HCT116 (cell line): ENCODE measurements at regions of chr6 and their contacts with region 1.

Region 1: GRCh38 chr6:30730601-30731435 is 10.7 kb downstream of the TUBB start:
- DNase-seq: peak; percentile 77
- ATAC-seq: peak; percentile 90
- H3K4me3 ChIP-seq: peak overlapping the region; percentile 41 to 53
- H3K27ac ChIP-seq: peak overlapping the region; percentile 55
- H3K4me1 ChIP-seq: peaks cover 12 to 37% of the 10 kb centered on the region in 2 experiments
- H3K27me3 ChIP-seq: no peaks in the 10 kb centered on the region
- CTCF ChIP-seq: peak; percentile 86 to 91 (median 88)
- POLR2A ChIP-seq: no peak
- RAD21 ChIP-seq: peak; percentile 98

Region 2: DNA sequence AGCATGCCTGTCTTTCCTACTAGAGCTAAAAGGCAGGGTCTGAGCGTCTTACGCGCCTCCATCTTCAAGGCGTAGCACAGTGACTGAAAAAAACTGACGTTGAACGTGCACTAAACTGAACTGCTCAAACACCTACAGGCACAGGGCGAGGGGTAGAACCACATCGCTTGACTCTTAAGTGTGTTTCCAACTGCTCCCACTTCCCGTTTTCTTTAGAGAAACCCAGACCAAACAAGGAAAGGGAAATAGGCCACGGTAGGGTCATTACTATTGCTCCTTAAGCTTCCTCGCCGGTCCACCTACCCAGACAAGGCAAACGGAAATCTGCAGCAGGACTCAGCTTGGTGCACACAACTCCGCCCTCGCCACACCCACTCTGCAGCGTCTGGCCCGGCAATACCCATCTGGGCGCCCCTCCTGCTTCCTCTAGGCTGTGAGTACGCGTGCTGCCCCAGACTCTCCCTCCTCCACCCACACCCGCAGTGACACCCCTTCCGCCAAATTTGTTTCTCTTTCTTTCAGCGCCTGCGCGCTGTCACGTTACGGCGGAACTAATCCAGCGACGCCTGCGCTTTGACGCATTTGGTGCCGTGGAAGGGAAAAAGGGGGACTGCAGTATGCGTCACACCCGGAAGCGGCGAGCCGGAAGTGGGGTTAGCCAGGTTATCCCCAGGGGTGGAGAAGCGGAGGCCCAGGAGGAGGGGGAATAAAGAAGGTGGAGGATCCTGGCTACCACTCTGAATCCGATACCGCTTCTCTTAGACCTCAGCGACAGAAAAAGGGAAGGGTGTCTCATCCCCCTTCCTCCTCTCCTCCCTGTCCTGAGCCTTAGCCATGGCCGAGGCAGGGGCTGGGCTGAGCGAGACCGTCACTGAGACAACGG is 664.0 kb before region 1 on chr6 and contains the start of gene PPP1R11:
- CTCF ChIA-PET with region 1: no interaction called
- POLR2A ChIA-PET with region 1: no interaction called
- RAD21 ChIA-PET with region 1: no interaction called
- intact Hi-C with region 1: no loop called
- DNase-seq: peak; percentile 99
- ATAC-seq: peak; percentile 96
- H3K4me3 ChIP-seq: peak within 1 kb of the TSS; percentile 78 to 84
- H3K27ac ChIP-seq: peak within 1 kb of the TSS; percentile 71
- H3K4me1 ChIP-seq: peaks cover 7 to 25% of the 10 kb centered on the region in 2 experiments; a peak in 3 of 4 replicates
- H3K27me3 ChIP-seq: no peaks in the 10 kb centered on the region
- CTCF ChIP-seq: no peak
- POLR2A ChIP-seq: peak; percentile 92
- RAD21 ChIP-seq: no peak
- total RNA-seq, gene PPP1R11: 29.3 TPM

Region 3: GRCh38 chr6:30541515-30542403 is 189.1 kb before region 1 on chr6:
- CTCF ChIA-PET with region 1: interaction called, 10 read pairs
- POLR2A ChIA-PET with region 1: interaction called, 4 read pairs
- RAD21 ChIA-PET with region 1: interaction called in 1 of 2 experiments, 5 read pairs
- intact Hi-C with region 1: loop called (anchors 5 kb)
- DNase-seq: peak; percentile 83
- ATAC-seq: peak; percentile 92
- H3K4me3 ChIP-seq: peak overlapping the region; percentile 36 to 47
- H3K27ac ChIP-seq: no peak overlapping the region
- H3K4me1 ChIP-seq: peaks cover 0 to 10% of the 10 kb centered on the region in 2 experiments; a peak in 2 of 4 replicates
- H3K27me3 ChIP-seq: no peaks in the 10 kb centered on the region
- CTCF ChIP-seq: peak; percentile 84 to 99 (median 97)
- POLR2A ChIP-seq: no peak
- RAD21 ChIP-seq: peak; percentile 78

Region 4: DNA sequence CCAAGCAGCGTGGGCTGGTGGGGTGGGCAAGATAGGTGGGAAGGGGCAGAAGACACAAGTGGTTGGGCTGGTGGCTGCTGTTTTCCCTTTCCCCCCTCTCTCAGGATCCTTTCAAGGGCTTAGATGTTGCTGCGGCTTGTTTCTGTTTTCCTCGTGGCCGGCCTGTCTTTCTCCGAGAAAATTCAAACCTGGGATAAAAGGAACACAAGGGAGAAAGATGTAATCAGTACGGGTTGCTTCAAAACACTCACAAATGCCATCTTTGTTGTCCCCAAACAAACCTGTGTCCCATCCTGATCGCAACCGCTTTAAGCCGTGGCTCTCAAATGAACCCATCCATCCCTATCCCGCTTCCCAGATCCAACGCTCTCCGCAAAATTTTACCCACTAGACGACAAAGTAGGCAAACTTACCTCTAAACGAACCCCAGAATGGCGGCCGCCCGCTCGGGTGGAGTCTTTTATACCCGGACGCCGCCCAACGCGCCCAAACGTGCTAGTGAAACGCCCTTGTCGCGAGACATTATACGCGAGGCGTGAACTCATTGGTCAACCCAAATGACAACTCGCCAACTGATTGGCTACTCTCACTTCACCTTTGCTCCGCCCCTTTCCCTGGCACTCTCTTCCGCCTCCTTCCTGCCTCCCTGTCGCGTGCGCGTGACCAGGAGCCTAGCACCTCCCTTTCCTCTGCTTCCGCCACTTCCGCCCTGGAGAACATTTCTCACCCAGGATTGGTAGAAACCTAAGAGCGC is 113.8 kb before region 1 on chr6 and contains the start of gene PPP1R10:
- CTCF ChIA-PET with region 1: interaction called, 26 read pairs
- POLR2A ChIA-PET with region 1: interaction called, 17 read pairs
- RAD21 ChIA-PET with region 1: interaction called in 1 of 2 experiments, 3 read pairs
- intact Hi-C with region 1: no loop called
- DNase-seq: peak; percentile 100
- ATAC-seq: peak; percentile 81
- H3K4me3 ChIP-seq: peak within 1 kb of the TSS; percentile 92 to 94
- H3K27ac ChIP-seq: peak within 1 kb of the TSS; percentile 87
- H3K4me1 ChIP-seq: peaks cover 13 to 40% of the 10 kb centered on the region in 2 experiments
- H3K27me3 ChIP-seq: no peaks in the 10 kb centered on the region
- CTCF ChIP-seq: no peak
- POLR2A ChIP-seq: peak; percentile 99
- RAD21 ChIP-seq: no peak
- total RNA-seq, gene PPP1R10: 104 TPM

Region 5: DNA sequence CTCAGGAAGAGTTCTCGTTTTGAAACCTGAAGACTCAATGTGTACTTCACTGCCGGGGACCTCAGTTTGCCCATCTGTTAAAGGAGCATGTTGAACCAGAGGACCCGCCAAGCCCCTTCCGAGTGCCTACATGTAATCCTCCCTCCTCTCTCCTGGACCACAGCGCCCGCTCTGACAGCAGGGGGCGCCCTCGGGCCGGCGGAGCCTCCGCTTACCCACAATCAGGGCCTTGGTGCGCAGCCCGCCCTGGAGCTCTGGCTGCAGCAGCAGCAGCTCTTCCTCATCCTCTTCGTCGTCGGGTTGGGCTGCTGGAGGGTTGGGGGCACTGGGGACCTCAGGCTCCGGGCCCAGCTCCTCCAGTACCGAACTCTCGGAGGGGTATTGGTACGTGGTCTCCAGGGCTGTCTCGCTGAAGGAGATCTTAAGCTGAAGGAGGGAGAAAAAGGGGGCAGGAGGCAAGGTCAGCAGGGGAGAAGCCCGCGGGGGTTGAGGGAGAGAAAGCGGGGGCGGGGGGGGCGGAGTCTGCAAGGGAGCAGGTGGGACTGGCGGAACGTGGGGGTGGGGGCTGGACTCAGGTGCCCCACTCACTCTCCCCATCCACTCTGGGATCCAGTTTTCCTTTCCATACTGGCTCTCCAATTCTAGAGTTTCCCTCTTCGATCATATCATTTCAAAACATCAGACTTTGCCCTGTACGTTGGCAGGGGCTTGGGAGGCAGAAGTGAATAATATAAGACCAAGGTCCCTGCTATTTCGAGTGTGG is 51.7 kb before region 1 on chr6:
- CTCF ChIA-PET with region 1: interaction called, 70 read pairs
- POLR2A ChIA-PET with region 1: interaction called, 15 read pairs
- RAD21 ChIA-PET with region 1: interaction called, 20 to 22 read pairs
- intact Hi-C with region 1: loop called (anchors 1 kb)
- DNase-seq: no peak
- ATAC-seq: peak; percentile 85
- H3K4me3 ChIP-seq: no peak overlapping the region
- H3K27ac ChIP-seq: 0 out of 2 replicates have a peak overlapping the region, but pooled peaks have one; percentile 8
- H3K4me1 ChIP-seq: peaks cover 22 to 34% of the 10 kb centered on the region in 2 experiments
- H3K27me3 ChIP-seq: no peaks in the 10 kb centered on the region
- CTCF ChIP-seq: peak in 2 of 3 experiments; percentile 96; a peak in 4 of 6 replicates
- POLR2A ChIP-seq: no peak
- RAD21 ChIP-seq: no peak

Region 6: GRCh38 chr6:30742316-30743098 is 11.7 kb after region 1 on chr6 and contains the start of gene FLOT1:
- CTCF ChIA-PET with region 1: interaction called, 6 read pairs
- POLR2A ChIA-PET with region 1: interaction called, 16 read pairs
- RAD21 ChIA-PET with region 1: no interaction called
- intact Hi-C with region 1: no loop called
- DNase-seq: peak; percentile 94
- ATAC-seq: peak; percentile 70
- H3K4me3 ChIP-seq: peak within 1 kb of the TSS; percentile 79 to 85
- H3K27ac ChIP-seq: peak within 1 kb of the TSS; percentile 93
- H3K4me1 ChIP-seq: peaks cover 37 to 79% of the 10 kb centered on the region in 2 experiments
- H3K27me3 ChIP-seq: no peaks in the 10 kb centered on the region
- CTCF ChIP-seq: no peak
- POLR2A ChIP-seq: peak; percentile 98
- RAD21 ChIP-seq: no peak
- total RNA-seq, gene FLOT1: 117 TPM